IMR-90 (cell line): ENCODE measurements at regions of chr9 and their contacts with region 1.

Region 1: GRCh38 chr9:91659529-91660495 is 236.2 kb upstream of the NFIL3 start:
- DNase-seq: peak; percentile 55
- ATAC-seq: peak; percentile 98
- H3K4me3 ChIP-seq: no peak overlapping the region
- H3K27ac ChIP-seq: no peak overlapping the region
- H3K4me1 ChIP-seq: no peaks in the 10 kb centered on the region
- H3K27me3 ChIP-seq: peaks cover 13% of the 10 kb centered on the region
- CTCF ChIP-seq: peak; percentile 67
- POLR2A ChIP-seq: no peak
- RAD21 ChIP-seq: peak; percentile 79

Region 2: GRCh38 chr9:91515074-91515687 is 144.6 kb before region 1 on chr9:
- CTCF ChIA-PET with region 1: no interaction called
- POLR2A ChIA-PET with region 1: no interaction called
- dilution Hi-C with region 1: loop called (anchors 25 kb)
- in situ Hi-C with region 1: no loop called
- intact Hi-C with region 1: no loop called
- DNase-seq: peak; percentile 96
- ATAC-seq: peak; percentile 95
- H3K4me3 ChIP-seq: peak overlapping the region; percentile 19; the same call in 1 of the 2 replicates
- H3K27ac ChIP-seq: peak overlapping the region; percentile 61
- H3K4me1 ChIP-seq: no peaks in the 10 kb centered on the region
- H3K27me3 ChIP-seq: no peaks in the 10 kb centered on the region
- CTCF ChIP-seq: no peak
- POLR2A ChIP-seq: peak; percentile 33; the same call in 1 of the 2 replicates
- RAD21 ChIP-seq: no peak; the same call in 1 of the 2 replicates